WTC11 (cell line): ENCODE measurements at regions of chr2 and their contacts with region 1.

Region 1: DNA sequence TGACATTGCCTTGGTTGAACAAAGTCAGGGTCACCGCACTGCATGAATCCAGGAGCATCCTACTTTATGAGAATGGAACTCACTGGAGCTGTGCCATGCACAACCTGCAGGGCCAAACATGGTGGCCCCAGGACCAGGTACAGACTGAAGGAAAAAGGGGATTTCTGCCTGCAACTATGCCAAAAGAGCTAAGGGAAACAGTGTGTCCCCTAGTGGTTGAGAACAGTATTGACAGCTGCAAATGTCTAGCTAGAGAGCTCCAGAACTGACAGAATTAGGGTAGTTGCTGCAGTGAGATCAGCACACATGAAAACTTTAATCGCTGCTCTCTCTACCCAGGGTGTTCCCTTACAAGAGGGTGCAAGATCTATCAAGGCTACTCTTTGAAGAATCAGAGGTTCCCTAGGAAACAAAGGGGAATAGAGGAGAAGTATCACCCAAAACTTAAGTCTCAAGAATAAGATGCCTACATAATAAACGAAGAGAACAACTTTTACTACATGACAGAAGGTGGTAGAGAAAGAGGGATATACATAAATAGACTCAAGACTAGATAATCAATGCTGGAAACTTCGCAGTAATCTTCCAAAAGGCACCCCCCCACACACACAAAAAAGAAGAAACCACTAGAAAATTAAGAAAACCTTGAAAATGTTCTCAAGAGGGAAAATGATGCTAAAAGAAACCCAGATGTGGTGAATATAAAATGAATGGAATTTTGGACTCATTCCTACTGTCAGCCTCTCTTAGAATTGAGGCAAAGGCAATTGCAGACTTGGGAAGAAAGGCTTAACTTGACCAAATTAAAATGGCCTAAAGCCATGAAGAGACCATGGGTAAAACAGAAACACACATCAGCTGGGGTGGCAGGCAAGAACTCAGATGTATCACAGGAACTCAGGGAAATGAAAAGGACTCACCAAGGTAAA is 43.6 kb upstream of the IHH start:
- DNase-seq: peak; percentile 41
- ATAC-seq: peak; percentile 98
- H3K4me3 Mint-ChIP-seq: no peak overlapping the region
- H3K27ac Mint-ChIP-seq: 0 out of 2 replicates have a peak overlapping the region, but pooled peaks have one; percentile 41
- H3K4me1 Mint-ChIP-seq: peaks cover 3% of the 10 kb centered on the region
- H3K27me3 Mint-ChIP-seq: no peaks in the 10 kb centered on the region
- CTCF ChIP-seq: peak; percentile 75

Region 2: GRCh38 chr2:219002395-219003266 is 101.7 kb before region 1 on chr2:
- CTCF ChIA-PET with region 1: interaction called, 12 read pairs
- POLR2A ChIA-PET with region 1: no interaction called
- DNase-seq: peak; percentile 95
- ATAC-seq: peak; percentile 69
- H3K4me3 Mint-ChIP-seq: peak overlapping the region; percentile 83
- H3K27ac Mint-ChIP-seq: no peak overlapping the region
- H3K4me1 Mint-ChIP-seq: peaks cover 22% of the 10 kb centered on the region
- H3K27me3 Mint-ChIP-seq: peaks cover 100% of the 10 kb centered on the region
- CTCF ChIP-seq: peak; percentile 29; the same call in 1 of the 2 replicates

Region 3: DNA sequence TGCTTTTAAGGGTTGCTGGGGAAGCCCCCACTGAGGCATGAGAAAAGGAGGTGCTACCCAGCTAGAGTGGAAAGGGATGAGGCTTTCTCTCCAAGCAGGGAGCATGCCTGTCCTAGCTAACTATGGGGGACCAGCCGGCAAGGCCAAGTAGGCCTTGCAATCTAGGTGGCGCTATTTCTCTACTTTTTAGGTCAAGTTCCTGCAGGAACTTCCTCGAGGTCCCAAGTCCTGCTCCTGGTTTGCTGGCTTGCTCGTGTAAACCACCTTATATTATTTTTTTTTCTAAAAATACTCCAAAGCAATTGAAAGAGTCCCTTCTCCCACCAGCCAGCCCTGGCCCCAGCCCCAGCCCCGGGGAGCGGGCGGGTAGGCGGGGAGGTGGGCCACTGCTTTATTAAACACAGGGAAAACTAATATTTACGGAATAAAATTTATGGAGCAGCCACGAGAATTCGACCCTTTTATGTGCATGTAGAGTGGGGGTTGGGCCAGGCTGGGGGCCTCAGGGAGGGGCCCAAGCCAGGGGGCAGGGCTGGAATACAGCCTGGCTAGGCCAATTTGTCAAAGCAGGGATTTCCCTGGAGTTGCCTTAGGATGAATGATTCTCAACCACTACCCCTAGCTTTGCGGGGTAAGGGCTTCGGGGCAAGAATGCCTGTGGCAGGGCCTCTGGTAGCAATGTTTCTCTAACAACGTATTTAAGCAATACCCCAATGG is 30.8 kb before region 1 on chr2:
- CTCF ChIA-PET with region 1: interaction called, 86 read pairs
- POLR2A ChIA-PET with region 1: no interaction called
- DNase-seq: peak; percentile 66
- ATAC-seq: peak; percentile 88
- H3K4me3 Mint-ChIP-seq: no peak overlapping the region
- H3K27ac Mint-ChIP-seq: no peak overlapping the region
- H3K4me1 Mint-ChIP-seq: peaks cover 6% of the 10 kb centered on the region
- H3K27me3 Mint-ChIP-seq: no peaks in the 10 kb centered on the region
- CTCF ChIP-seq: peak; percentile 70

Region 4: DNA sequence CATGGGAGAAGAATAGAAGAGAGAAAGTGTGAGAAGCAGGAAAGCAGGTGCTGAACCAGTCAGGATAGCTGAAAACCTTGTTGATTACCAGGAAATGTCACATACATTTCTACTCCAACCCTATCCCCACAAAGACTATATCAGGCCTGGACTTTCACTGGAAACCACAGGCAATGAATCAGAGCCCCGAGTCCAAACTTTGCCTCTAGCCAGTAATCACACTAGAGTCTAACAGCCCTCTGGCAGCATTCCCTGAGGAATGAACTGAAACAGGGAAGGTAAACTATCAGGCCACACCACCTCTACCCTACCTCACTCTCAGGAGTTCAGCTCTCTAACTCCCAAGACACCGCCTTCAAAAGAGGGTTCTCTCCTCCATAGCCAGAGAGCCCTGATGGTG is 25.0 kb before region 1 on chr2:
- CTCF ChIA-PET with region 1: interaction called, 86 read pairs
- POLR2A ChIA-PET with region 1: no interaction called
- DNase-seq: no peak
- ATAC-seq: no peak
- H3K4me3 Mint-ChIP-seq: no peak overlapping the region
- H3K27ac Mint-ChIP-seq: no peak overlapping the region
- H3K4me1 Mint-ChIP-seq: 0 out of 2 replicates have a peak, but pooled peaks cover 6% of the 10 kb centered on the region
- H3K27me3 Mint-ChIP-seq: no peaks in the 10 kb centered on the region
- CTCF ChIP-seq: no peak

Region 5: GRCh38 chr2:219087361-219087760 is 17.0 kb before region 1 on chr2:
- CTCF ChIA-PET with region 1: interaction called, 10 read pairs
- POLR2A ChIA-PET with region 1: no interaction called
- DNase-seq: no peak
- ATAC-seq: no peak; the same call in 1 of the 2 replicates
- H3K4me3 Mint-ChIP-seq: no peak overlapping the region
- H3K27ac Mint-ChIP-seq: no peak overlapping the region
- H3K4me1 Mint-ChIP-seq: peaks cover 19% of the 10 kb centered on the region
- H3K27me3 Mint-ChIP-seq: no peaks in the 10 kb centered on the region
- CTCF ChIP-seq: no peak

Region 6: DNA sequence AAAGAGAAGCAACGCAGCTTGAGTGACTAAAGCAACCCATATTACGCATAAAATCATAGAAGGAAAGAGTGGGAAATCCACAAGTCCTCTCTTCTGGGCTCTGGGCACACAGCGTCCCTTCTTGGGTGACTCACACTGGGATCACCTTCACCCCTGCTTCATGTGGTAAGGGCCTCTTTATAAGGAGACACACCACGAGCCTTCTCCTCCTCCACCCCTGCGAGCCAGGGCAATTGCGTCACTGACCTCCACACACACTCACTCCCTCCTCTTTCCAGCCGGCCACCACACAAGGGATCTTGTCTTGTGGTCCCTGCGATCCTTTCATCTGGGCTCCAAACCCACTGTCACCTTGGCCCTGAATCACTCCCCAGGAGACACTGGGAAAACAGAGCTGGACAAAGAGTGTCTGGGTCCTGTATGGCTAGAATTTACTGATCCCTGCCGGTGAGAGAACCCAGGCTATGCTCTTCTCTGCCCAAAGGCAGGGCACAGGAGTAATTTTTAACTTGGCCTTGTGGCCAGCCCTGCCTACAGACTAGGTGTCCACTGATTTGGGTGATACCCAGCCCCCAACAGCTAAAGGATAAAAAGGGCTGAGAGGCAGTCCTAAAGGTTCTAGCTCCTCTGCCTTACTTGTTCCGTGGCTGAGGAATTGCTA is 21.0 kb after region 1 on chr2:
- CTCF ChIA-PET with region 1: interaction called, 62 read pairs
- POLR2A ChIA-PET with region 1: no interaction called
- DNase-seq: no peak
- ATAC-seq: no peak
- H3K4me3 Mint-ChIP-seq: no peak overlapping the region
- H3K27ac Mint-ChIP-seq: no peak overlapping the region
- H3K4me1 Mint-ChIP-seq: peaks cover 18% of the 10 kb centered on the region
- H3K27me3 Mint-ChIP-seq: no peaks in the 10 kb centered on the region
- CTCF ChIP-seq: no peak

Region 7: GRCh38 chr2:219133976-219134375 is 29.6 kb after region 1 on chr2:
- CTCF ChIA-PET with region 1: interaction called, 13 read pairs
- POLR2A ChIA-PET with region 1: no interaction called
- DNase-seq: no peak
- ATAC-seq: peak; percentile 44; the same call in 1 of the 2 replicates
- H3K4me3 Mint-ChIP-seq: no peak overlapping the region
- H3K27ac Mint-ChIP-seq: peak overlapping the region; percentile 15
- H3K4me1 Mint-ChIP-seq: peaks cover 9% of the 10 kb centered on the region
- H3K27me3 Mint-ChIP-seq: no peaks in the 10 kb centered on the region
- CTCF ChIP-seq: no peak